Tibial artery (tissue), 4 donors: ENCODE measurements at regions of chr11 and their contacts with region 1.

Region 1: DNA sequence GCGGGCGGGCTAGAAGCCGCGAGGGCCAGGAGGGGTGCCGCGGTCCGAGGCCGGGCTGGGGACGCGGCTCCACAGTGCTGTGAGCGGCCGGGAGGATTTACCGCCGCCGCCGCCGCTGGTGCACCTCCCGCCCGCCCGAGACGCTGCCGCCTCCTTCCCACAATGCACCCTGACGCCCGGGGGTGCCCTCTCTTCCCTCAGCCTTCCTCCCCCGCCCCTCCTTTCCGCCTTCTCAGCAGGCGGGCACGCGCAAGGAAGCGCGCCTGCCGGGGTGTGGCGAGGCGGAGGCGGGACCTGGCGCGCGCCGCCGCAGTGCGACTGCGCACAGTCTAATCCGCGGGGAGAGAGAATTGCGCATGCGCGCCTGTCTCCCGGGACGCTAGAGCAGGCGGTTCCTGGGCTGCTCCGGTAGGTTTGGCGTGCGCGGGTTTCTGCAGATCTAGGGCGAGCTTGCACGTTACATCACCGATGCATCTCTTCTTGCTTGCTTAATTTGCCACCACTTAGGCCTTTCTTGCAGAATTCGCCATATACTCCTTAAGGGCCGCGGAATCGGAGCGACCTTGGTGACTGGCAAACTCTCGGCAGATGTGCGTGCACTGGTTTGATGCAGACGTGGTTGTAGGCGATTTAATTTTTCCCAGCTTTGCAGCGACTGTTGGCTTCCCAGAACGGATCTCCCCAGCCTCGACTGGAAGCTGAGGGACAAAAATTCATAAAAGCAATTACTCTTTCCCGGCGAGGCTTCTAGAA is at the starts of genes GVQW3 and THAP12:
- DNase-seq: peak; percentile 97 to 99
- H3K4me3 ChIP-seq: peak within 1 kb of the TSS; percentile 92 to 100
- H3K27ac ChIP-seq: peak within 1 kb of the TSS; percentile 80 to 90
- H3K4me1 ChIP-seq: peaks cover 0 to 38% (median 26%) of the 10 kb centered on the region in 4 donors
- H3K27me3 ChIP-seq: no peaks in the 10 kb centered on the region
- CTCF ChIP-seq: peak in 1 of 2 experiments; percentile 11

Region 2: DNA sequence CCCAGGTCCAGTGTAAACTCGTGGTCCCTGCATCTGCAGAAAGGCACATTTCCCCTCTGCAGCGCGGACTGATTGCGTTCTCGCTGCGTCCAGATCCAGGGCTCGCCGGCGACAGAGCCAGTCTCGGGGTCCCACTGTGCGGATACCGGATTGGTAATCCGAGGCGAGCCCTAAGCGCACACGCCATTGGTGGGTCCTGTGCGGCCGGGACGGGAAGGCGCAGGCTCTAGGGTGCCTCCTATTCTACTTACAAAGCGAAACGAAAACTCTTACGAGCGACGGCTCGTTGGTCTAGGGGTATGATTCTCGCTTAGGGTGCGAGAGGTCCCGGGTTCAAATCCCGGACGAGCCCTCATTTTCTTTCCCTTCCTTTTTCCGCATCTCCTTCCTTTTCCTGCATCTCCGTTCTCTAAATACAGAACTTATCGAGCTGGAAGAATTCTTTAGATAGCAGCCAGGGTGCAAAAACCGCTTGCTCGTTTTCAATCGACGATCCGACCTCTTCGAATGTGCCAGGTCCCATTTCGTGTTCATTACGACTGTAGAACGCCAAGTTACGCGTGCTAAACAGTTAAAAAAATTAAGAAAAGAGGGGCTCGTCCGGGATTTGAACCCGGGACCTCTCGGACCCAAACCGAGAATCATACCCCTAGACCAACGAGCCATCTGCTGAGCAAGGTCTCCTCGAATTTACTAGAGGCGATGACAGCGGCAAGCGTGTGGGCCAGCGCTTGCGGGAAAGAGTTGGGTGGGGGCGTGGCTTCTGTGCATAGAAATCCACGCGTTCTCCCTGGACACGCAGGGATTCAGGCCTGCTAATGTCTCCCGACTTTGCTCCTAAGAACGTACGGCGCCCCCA is 145.7 kb before region 1 on chr11:
- intact Hi-C with region 1: loop called (anchors 10 kb)
- DNase-seq: peak; percentile 91 to 95
- H3K4me3 ChIP-seq: peak overlapping the region; percentile 77 to 83
- H3K27ac ChIP-seq: peak overlapping the region; percentile 83 to 86
- H3K4me1 ChIP-seq: peaks cover 0 to 18% (median 12%) of the 10 kb centered on the region in 4 donors
- H3K27me3 ChIP-seq: peaks cover 0 to 2% of the 10 kb centered on the region in 2 donors
- CTCF ChIP-seq: no peak

Region 3: DNA sequence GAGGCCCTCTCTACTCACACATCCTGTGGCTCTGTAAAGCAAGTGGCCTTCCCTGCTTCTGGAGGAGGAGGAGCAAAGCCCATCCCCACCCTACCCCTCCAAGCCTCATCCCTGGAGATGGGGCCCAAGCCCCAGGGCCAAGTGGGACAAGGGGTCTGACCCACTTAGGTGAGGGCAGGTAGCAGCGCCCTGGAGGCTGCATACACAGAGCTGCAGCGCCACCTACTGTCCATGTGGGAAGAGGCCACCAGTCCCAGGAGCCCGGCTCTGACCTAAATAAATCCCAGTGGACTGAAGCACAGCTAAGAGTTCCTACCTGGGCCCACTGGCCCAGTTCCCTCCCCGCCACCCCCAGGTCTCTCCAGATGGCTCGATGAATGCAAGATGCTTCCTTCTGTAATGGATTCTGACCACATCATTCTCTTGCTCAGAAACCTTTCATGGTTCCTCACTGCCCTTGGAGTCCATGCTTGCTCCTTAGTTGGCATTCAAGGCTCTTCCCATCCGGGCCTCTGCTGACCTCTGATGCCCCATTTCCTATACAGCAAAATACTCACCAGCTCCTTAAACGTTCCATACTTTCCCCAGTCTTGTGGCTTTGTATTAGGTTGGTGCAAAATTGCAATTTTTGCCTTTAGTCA is 62.3 kb before region 1 on chr11:
- intact Hi-C with region 1: loop called (anchors 10 kb)
- DNase-seq: peak; percentile 80 to 83
- H3K4me3 ChIP-seq: no peak overlapping the region
- H3K27ac ChIP-seq: no peak overlapping the region
- H3K4me1 ChIP-seq: peaks cover 0 to 10% (median 3%) of the 10 kb centered on the region in 4 donors
- H3K27me3 ChIP-seq: peaks cover 0 to 29% of the 10 kb centered on the region in 2 donors
- CTCF ChIP-seq: peak; percentile 93

Region 4: GRCh38 chr11:76339221-76339620 is 41.9 kb before region 1 on chr11:
- intact Hi-C with region 1: loop called (anchors 2 kb)
- DNase-seq: peak; percentile 86 to 91
- H3K4me3 ChIP-seq: no peak overlapping the region
- H3K27ac ChIP-seq: peak overlapping the region; percentile 64 to 80
- H3K4me1 ChIP-seq: peaks cover 0 to 36% (median 31%) of the 10 kb centered on the region in 4 donors
- H3K27me3 ChIP-seq: no peaks in the 10 kb centered on the region
- CTCF ChIP-seq: no peak

Region 5: DNA sequence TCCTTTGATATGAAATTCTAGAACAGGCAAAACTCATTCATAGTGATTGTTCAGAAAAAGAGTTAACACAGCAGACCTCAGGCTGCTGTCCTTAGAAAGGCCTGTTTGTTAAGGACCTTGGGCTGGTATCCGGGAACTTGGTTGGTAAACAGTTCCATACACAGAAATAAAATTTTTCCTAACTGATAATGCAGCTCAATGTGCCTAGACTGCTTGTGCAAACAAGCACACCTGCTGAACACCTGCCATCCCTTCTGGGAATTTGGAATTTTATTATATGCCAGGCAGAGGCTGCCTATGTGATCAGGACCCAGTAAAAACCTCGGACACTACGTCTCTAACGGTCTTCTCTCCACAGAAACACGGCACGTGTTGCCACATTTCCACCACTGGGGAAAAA is 11.7 kb before region 1 on chr11:
- intact Hi-C with region 1: no loop called
- DNase-seq: no peak
- H3K4me3 ChIP-seq: no peak overlapping the region
- H3K27ac ChIP-seq: no peak overlapping the region
- H3K4me1 ChIP-seq: peaks cover 0 to 47% (median 11%) of the 10 kb centered on the region in 4 donors
- H3K27me3 ChIP-seq: no peaks in the 10 kb centered on the region
- CTCF ChIP-seq: no peak

Region 6: GRCh38 chr11:76444384-76445123 is 63.4 kb after region 1 on chr11 and contains the start of gene EMSY:
- intact Hi-C with region 1: loop called (anchors 5 kb)
- DNase-seq: peak; percentile 98 to 99
- H3K4me3 ChIP-seq: peak within 1 kb of the TSS; percentile 80 to 99
- H3K27ac ChIP-seq: peak within 1 kb of the TSS; percentile 89 to 96
- H3K4me1 ChIP-seq: peaks cover 0 to 22% (median 17%) of the 10 kb centered on the region in 4 donors
- H3K27me3 ChIP-seq: no peaks in the 10 kb centered on the region
- CTCF ChIP-seq: no peak